GM10248 (cell line): ENCODE measurements at regions of chr16 and their contacts with region 1.

Region 1: DNA sequence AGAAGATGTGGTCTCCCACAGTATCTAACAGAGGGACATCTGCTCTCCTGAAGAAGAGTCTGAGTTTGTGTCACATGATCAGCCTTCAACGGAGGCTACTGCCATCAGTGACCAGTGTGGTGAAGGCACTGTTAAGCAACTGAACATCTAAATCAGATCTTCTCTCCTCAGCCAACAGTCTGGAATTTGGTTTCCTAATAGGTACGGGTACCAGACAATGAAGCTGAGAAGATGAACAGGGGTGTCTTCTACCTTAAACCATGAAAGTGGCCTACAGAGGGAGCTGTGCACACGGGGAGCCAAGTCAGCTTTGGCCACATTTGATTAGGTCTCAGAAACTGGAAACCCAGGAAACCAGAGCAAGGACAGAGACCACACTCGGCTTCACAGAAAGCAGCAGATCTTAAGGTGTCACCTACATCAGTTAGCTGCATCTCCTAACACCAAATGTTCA is 41.8 kb downstream of the BRD7 start:
- DNase-seq: peak; percentile 49
- CTCF ChIP-seq: peak; percentile 51

Region 2: GRCh38 chr16:50273681-50274325 is 53.2 kb before region 1 on chr16:
- CTCF ChIA-PET with region 1: interaction called, 24 read pairs
- POLR2A ChIA-PET with region 1: no interaction called
- DNase-seq: peak; percentile 88
- CTCF ChIP-seq: no peak

Region 3: DNA sequence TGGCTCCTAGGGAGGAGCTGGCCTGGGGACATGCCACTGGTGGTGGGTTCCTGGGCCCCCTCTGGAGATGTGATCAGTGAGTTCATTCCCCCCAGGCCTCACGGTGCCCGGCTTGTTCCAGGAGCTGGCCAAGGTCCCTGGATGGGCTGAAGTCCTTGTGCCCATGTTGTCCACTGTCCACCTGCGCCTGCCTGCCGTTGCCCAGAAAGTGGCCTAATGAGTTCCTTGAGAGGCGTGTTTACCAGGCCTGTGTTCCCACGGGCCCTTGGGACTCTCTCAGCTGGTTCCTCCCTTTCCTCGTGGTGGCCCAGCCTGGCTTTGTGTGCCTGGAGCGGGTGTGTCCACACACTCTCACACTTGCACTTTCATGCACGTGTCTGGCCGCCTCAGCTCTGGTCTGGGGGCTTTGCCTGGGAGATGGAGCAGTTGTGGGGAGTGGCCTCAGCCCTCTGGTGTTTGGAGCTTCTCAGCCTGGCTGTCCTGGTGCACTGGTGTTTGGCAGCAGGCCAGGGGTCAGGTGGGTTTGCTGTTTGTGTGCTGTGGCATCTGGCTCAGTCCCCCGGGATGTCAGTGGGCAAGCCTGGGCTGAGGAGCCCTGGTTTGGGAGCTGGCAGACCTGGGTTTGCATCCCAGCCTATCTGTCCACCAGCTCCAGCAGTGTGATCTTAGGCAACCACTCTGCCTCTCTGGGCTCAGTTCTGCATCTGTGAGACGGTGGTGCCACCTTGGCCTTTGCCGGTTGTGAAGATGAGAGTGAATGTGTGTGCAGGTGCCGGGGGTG is 42.7 kb before region 1 on chr16:
- CTCF ChIA-PET with region 1: interaction called, 23 read pairs
- POLR2A ChIA-PET with region 1: no interaction called
- DNase-seq: no peak
- CTCF ChIP-seq: no peak

Region 4: DNA sequence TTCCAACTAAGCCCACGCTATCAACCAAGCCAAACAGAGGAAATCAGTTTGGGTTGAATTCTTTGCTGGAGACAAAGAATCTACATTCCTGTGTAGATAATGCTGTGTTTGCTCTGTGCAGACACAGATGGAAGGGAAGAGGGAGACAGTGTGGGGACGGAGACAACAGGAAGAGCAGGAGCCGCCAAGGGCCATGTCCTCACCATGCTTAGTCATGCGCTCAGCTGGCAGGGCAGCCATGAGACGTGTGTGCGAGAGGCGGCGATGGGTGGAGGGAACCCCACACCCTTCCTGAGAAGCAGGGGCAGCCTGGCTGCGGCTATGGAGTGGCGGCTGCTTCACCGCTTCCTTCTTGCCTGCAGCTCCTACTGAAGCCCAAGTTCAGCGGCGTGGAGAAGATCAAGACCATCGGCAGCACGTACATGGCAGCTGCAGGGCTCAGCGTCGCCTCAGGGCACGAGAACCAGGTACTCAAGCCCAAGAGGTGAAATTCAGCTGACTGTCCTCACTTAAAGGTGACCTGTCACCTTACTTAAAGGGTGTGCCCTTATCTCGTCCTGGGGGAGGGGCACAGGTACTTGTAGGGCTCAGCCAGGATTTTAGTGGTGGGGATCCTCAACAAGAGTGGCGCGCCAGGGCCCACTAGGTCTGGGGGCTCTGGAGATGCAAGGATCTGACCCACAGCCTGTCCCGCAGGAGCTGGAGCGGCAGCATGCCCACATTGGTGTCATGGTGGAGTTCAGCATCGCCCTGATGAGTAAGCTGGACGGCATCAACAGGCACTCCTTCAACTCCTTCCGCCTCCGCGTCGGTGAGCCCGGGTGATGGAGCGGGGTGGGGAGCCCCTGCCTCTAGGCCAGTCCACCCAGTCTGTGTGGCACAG is 13.1 kb before region 1 on chr16:
- CTCF ChIA-PET with region 1: interaction called, 30 read pairs
- POLR2A ChIA-PET with region 1: interaction called, 3 read pairs
- DNase-seq: peak; percentile 18
- CTCF ChIP-seq: no peak

Region 5: DNA sequence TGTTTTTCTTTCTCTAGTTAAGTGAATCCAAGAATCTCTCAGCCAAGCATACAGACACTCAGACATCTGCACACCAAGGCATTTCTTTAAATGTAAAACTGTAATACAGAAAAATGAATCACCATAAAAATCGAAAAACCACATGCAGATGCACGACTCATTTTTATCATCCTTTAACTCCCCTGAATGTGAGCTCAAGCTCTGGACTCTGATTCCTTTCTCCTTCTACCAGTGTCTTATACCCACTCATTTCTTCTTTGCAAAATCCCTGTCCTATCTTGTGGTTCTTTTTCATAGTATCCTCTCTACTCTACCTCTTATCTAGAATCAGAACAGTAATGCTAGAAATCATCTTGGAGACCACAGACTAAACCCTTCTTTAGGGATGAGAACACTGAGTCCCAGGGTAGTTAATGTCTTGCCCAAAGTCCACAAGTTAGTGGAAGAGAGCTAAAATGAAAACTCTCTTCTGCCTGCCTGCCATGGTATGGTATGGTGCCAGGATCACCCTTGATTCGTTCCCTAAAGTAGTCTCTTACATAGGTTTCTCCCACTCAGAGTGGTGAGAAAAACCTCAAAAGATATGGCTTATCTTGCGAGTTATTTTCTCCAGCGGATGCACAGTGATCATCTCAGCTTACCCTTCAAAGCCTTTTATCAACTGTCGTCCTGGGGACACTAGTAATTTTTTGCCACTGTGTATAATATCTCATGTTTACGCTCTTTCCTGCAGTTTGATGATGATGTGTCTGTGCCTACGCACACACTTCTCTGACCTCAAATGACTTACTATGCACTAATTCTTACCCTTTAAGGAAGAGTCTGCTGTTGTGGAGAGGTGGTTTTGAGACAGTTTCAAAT is 11.6 kb after region 1 on chr16:
- CTCF ChIA-PET with region 1: interaction called, 10 read pairs
- POLR2A ChIA-PET with region 1: no interaction called
- DNase-seq: no peak
- CTCF ChIP-seq: no peak

Region 6: DNA sequence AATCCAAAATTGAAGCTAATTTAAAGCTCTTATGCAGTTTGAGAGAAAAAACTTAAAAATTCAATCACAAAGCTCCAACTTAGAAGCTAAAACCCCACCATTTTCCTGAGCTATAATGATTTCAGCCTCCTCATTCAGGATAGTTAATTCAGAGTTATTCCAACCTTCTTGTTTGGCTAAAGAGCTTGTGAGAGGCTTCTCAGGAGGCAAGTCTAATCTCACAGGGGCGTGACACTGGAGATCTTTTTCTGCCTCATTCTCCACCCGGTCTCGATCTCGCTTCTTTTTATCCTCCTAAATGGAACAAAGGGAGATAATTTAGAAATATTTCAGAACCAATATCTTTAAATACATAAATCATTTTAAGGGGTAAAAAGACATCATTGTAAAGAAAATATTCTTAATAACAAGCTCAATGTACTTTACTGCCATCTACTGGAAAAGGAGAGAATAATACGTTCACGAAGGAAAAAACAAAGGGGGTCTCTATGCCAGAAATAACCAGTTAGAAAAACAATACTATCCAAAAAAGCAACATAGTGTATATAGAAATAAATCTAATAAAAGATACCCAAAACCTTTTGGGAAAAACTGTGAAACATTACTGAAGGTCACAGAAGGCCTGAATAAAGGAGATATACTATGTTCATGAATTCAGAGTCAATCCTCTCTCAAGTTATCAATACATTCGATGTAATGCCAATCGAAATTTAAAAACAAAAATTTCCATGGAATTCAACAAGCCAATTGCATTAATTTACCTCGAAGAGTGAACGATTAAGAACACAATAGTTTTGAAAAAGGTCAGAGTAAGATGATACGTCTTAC is 27.9 kb after region 1 on chr16:
- CTCF ChIA-PET with region 1: interaction called, 76 read pairs
- POLR2A ChIA-PET with region 1: no interaction called
- DNase-seq: no peak
- CTCF ChIP-seq: peak; percentile 40